ENCODE measurements at regions of chr17 and their contacts with region 1.

Region 1: DNA sequence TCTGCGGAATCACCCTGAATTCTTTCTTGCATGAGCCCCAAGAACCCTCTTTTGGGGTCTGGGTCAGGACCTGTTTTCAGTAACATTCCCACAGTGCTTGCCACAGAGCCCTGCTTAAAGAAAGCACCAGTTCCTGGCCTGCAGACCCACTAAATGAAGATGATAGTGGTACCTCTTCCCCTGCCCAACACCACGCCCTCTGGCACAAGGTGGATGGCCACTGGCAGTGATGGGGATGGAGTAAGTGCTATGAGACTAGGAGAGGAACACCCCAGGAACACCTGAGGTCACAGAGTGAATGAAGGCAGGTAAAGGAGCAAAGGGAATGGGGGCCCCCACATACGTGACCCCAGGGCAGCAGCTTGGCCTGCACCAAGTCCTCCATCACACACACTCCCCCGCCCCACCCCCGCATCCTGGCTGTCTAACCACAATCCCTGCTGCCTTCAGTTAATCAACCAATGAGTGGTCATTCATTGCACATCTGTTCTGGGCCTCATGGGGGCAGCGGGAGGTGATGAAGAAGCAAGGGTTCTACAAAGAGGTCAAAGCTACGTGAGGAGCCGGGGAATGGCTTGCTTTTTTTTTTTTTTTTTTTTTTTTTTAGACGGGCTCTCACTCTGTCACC is 3.9 kb upstream of the PPY start:
- DNase-seq: no peak
- ATAC-seq: no peak
- H3K4me3 ChIP-seq: no peak overlapping the region
- H3K4me3 Mint-ChIP-seq: no peak overlapping the region
- H3K27ac ChIP-seq: no peak overlapping the region
- H3K27ac Mint-ChIP-seq: no peak overlapping the region
- H3K4me1 ChIP-seq: no peaks in the 10 kb centered on the region
- H3K4me1 Mint-ChIP-seq: no peaks in the 10 kb centered on the region
- H3K27me3 ChIP-seq: peaks cover 0 to 7% (median 0%) of the 10 kb centered on the region in 4 experiments
- H3K27me3 Mint-ChIP-seq: peaks cover 46% of the 10 kb centered on the region
- CTCF ChIP-seq: no peak

Region 2: DNA sequence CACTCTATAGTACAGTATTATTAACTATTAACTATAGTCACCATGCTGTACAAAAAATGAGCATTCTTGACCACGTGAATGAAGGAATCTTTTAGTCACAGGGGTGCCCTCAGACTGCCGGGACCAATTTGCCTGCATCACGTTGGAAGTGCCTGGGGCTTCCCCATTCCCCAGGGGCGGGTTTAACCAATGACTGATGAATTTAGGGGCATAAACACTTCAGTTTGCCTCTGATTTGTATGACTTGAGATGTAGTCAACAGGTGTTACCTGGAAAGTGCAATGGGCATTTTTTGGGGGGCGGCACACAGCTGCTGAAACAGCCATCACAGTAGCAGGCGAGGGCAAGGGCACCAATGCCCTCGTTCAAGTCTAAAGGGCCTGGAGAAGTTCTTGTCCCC is 16.3 kb after region 1 on chr17:
- CTCF ChIA-PET with region 1: interaction called, 19 read pairs
- POLR2A ChIA-PET with region 1: no interaction called
- intact Hi-C with region 1: no loop called
- DNase-seq: no peak
- ATAC-seq: no peak
- H3K4me3 ChIP-seq: no peak overlapping the region
- H3K4me3 Mint-ChIP-seq: no peak overlapping the region
- H3K27ac ChIP-seq: no peak overlapping the region
- H3K27ac Mint-ChIP-seq: no peak overlapping the region
- H3K4me1 ChIP-seq: no peaks in the 10 kb centered on the region
- H3K4me1 Mint-ChIP-seq: no peaks in the 10 kb centered on the region
- H3K27me3 ChIP-seq: peaks cover 0 to 12% (median under 1%) of the 10 kb centered on the region in 4 experiments
- H3K27me3 Mint-ChIP-seq: peaks cover 25% of the 10 kb centered on the region
- CTCF ChIP-seq: no peak

Region 3: DNA sequence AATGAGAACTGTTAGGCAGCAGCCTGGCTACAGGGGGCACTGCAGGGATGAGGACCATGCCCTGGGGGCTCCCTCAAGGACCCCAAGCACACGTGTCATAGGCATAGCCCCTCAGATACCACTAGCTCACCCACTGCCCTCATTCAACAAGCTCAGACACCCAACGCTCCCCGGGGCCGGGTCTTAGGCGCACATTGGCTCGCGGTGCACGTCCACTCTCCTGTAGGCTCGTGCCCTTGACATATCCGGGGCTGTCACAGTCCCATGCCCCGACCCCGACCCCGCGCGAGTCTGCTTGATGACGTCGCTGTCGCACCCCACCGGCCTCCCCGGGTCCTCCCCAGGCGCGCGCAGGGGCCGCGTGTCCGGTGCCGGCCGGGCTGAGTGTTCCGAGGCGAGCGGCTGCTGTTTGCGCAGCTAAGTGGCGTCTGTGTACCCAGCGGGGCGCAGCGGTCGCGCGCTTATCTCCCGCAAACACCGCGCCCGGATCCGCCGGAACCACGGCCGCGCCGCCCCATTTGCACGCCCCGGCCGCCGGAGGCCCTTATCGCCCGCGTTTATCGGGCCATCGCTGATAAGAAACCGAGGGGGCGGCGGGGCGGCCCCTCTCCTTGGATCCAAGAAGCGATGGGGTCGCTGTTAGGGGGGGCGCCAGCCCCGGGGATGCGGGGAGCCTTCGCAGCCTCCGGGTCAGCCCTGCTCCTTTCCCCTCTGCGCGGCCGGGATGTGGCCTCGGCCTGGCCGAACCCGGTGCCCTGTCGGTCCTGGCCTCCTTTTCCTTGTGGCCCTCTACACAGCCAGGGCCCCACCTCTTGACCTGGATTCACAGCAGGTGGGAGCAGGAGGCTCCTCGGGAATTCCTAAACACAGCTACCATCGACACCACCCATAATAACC is 37.6 kb after region 1 on chr17:
- CTCF ChIA-PET with region 1: interaction called, 10 read pairs
- POLR2A ChIA-PET with region 1: no interaction called
- intact Hi-C with region 1: no loop called
- DNase-seq: peak; percentile 23
- ATAC-seq: peak; percentile 14
- H3K4me3 ChIP-seq: peak overlapping the region in 3 of 5 experiments; percentile 11 to 29 (median 21)
- H3K4me3 Mint-ChIP-seq: peak overlapping the region; percentile 34
- H3K27ac ChIP-seq: no peak overlapping the region
- H3K27ac Mint-ChIP-seq: no peak overlapping the region
- H3K4me1 ChIP-seq: peaks cover 10 to 11% of the 10 kb centered on the region in 2 donors
- H3K4me1 Mint-ChIP-seq: peaks cover 2% of the 10 kb centered on the region
- H3K27me3 ChIP-seq: peaks cover 0 to 45% (median 30%) of the 10 kb centered on the region in 4 experiments
- H3K27me3 Mint-ChIP-seq: peaks cover 59% of the 10 kb centered on the region
- CTCF ChIP-seq: no peak